AG04449 (cell line): ENCODE measurements at regions of chr9 and their contacts with region 1.

Region 1: GRCh38 chr9:18442629-18443491 is 31.1 kb upstream of the ADAMTSL1 start:
- DNase-seq: no peak
- H3K4me3 ChIP-seq: no peak overlapping the region
- CTCF ChIP-seq: peak; percentile 84

Region 2: DNA sequence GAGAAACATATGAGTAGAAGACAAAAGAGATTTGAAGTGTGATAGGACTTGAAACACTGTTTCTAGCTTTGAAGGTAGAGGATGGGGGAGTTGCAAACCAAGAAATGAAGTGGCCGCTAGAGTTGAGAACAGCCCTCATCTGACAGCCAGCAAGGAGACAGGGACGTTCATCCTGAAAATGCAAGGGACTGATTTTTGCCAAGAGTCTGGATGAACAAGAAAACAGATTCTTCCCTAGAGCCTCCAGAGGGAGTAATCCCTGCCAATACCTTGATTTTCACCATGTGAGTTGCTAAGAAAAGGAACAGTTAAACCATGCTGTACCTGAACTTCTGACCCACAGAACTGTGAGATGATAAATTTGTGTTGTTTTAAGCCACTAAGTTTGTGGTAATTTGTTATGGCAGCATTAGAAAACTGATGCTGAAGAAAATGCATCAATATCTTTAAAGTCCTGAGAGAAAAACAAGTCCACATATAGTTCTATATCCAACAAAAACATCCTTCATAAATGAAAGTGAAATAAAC is 122.9 kb before region 1 on chr9:
- CTCF ChIA-PET with region 1: interaction called, 12 read pairs
- POLR2A ChIA-PET with region 1: no interaction called
- DNase-seq: no peak
- H3K4me3 ChIP-seq: no peak overlapping the region
- CTCF ChIP-seq: peak; percentile 19

Region 3: DNA sequence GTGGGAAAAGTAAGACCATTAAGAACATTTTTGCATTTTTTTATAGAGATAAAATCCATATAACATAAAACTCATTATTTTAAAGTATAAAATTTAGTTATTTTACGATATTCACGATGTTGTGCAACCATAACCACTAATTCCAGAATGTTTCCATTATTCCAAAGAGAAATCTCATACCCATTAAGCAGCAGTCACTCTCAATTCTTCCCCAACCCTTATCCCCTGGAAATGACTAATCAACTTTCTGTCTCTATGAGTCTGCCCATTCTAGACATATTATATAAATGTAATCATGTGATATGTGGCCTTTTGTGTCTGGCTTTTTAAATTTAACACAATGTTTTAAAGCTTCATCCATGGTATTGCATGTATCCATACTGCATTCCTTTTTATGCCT is 84.5 kb before region 1 on chr9:
- CTCF ChIA-PET with region 1: interaction called, 11 read pairs
- POLR2A ChIA-PET with region 1: no interaction called
- DNase-seq: no peak
- H3K4me3 ChIP-seq: no peak overlapping the region
- CTCF ChIP-seq: no peak

Region 4: DNA sequence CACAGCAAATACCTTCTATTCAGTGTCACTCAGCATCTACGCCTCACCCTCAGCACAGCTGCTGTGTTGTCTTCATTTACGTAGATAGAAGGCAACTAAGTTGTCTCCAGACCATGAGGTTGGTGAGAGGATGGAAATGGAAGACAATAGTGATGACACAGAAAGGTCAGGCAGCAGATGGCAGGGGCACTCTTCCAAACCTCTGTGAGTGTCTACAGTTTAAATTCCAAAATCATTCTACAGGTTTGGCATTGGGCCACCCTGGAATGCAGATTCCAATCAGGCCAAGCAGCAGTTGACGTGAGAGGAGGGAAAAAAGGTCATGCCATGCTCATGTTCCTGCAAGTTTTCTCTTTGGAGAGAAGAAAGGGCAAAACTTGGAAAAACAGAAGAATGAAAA is 37.6 kb before region 1 on chr9:
- CTCF ChIA-PET with region 1: interaction called, 17 read pairs
- POLR2A ChIA-PET with region 1: interaction called, 3 read pairs
- DNase-seq: no peak
- H3K4me3 ChIP-seq: no peak overlapping the region
- CTCF ChIP-seq: no peak

Region 5: GRCh38 chr9:18429070-18429469 is 13.8 kb before region 1 on chr9:
- CTCF ChIA-PET with region 1: interaction called, 53 read pairs
- POLR2A ChIA-PET with region 1: interaction called, 4 read pairs
- DNase-seq: no peak
- H3K4me3 ChIP-seq: no peak overlapping the region
- CTCF ChIP-seq: no peak

Region 6: GRCh38 chr9:18473652-18474279 is 30.9 kb after region 1 on chr9 and contains the start of gene ADAMTSL1:
- CTCF ChIA-PET with region 1: interaction called, 32 read pairs
- POLR2A ChIA-PET with region 1: interaction called, 5 read pairs
- DNase-seq: no peak
- H3K4me3 ChIP-seq: peak within 1 kb of the TSS; percentile 84
- CTCF ChIP-seq: no peak